Natural killer cell (primary cell): ENCODE measurements at regions of chr2 and their contacts with region 1.

Region 1: DNA sequence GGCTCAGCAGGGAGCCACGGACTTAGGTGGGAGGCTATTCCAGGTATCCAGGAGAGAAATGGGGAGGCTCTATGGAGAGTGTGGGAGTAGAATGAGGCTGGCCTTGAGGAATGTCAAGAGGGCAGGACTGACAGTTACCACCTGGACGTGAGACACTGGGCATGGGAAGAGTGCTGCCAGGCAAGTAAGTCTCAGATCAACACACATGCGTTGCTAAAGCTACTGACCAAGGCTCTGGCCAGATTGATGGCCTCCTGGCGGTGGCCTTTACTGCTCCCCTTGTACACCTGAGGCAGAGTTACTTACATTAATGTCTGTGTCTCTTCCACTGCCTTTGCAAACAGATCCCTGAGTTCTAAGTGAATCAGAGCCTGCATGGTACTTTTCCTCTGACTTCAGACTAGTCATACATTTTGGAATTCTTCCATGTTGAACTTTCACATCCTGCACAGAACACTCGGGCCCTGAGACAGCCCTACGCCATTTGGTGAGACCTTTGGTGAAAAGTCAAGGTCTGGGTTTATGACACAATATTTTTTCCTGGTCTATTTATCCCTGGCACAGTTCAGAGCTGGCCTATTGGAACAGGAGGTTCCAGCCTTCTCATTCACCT is 398.8 kb upstream of the TRIB2 start:
- DNase-seq: no peak
- ATAC-seq: no peak
- H3K4me3 ChIP-seq: no peak overlapping the region
- H3K4me3 Mint-ChIP-seq: no peak overlapping the region
- H3K27ac ChIP-seq: no peak overlapping the region
- H3K27ac Mint-ChIP-seq: no peak overlapping the region
- H3K4me1 ChIP-seq: peaks cover 23% of the 10 kb centered on the region
- H3K4me1 Mint-ChIP-seq: peaks cover 39 to 49% of the 10 kb centered on the region in 2 donors
- H3K27me3 ChIP-seq: peaks cover 3% of the 10 kb centered on the region
- H3K27me3 Mint-ChIP-seq: peaks cover 52 to 90% of the 10 kb centered on the region in 2 donors
- CTCF ChIP-seq: no peak

Region 2: DNA sequence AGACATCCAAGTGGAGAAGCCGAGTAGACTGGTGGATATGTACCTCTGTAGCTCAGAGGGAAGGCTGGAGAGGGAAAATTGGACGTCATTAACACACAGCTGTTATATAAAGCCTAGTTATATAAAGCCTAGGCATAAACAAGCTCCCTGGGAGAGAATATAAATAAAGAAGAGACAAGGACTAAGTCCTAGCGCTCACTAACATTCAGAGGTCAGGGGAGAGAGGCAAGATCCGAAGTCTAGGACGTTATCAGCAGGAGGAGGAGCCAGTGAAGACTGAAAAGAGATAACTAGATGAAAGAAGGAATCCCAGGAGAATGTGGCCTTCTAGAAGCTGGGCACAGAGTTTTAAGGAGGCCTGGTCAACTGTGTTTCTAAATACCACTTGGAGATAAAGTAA is 1683.4 kb before region 1 on chr2:
- intact Hi-C with region 1: no loop called
- DNase-seq: no peak
- ATAC-seq: no peak
- H3K4me3 ChIP-seq: no peak overlapping the region
- H3K4me3 Mint-ChIP-seq: no peak overlapping the region
- H3K27ac ChIP-seq: no peak overlapping the region
- H3K27ac Mint-ChIP-seq: no peak overlapping the region
- H3K4me1 ChIP-seq: no peaks in the 10 kb centered on the region
- H3K4me1 Mint-ChIP-seq: peaks cover 0 to 10% of the 10 kb centered on the region in 2 donors
- H3K27me3 ChIP-seq: no peaks in the 10 kb centered on the region
- H3K27me3 Mint-ChIP-seq: no peaks in the 10 kb centered on the region
- CTCF ChIP-seq: no peak

Region 3: GRCh38 chr2:11863513-11864328 is 454.2 kb before region 1 on chr2:
- intact Hi-C with region 1: loop called (anchors 10 kb)
- DNase-seq: peak; percentile 52 to 86
- ATAC-seq: peak; percentile 83 to 95 (median 94)
- H3K4me3 ChIP-seq: no peak overlapping the region
- H3K4me3 Mint-ChIP-seq: peak overlapping the region; percentile 71
- H3K27ac ChIP-seq: no peak overlapping the region
- H3K27ac Mint-ChIP-seq: peak overlapping the region in 1 of 2 donors; percentile 60
- H3K4me1 ChIP-seq: peaks cover 12% of the 10 kb centered on the region
- H3K4me1 Mint-ChIP-seq: peaks cover 6 to 15% of the 10 kb centered on the region in 2 donors
- H3K27me3 ChIP-seq: no peaks in the 10 kb centered on the region
- H3K27me3 Mint-ChIP-seq: peaks cover 7 to 11% of the 10 kb centered on the region in 2 donors
- CTCF ChIP-seq: peak; percentile 94